GM13977 (cell line): ENCODE measurements at regions of chr11 and their contacts with region 1.

Region 1: DNA sequence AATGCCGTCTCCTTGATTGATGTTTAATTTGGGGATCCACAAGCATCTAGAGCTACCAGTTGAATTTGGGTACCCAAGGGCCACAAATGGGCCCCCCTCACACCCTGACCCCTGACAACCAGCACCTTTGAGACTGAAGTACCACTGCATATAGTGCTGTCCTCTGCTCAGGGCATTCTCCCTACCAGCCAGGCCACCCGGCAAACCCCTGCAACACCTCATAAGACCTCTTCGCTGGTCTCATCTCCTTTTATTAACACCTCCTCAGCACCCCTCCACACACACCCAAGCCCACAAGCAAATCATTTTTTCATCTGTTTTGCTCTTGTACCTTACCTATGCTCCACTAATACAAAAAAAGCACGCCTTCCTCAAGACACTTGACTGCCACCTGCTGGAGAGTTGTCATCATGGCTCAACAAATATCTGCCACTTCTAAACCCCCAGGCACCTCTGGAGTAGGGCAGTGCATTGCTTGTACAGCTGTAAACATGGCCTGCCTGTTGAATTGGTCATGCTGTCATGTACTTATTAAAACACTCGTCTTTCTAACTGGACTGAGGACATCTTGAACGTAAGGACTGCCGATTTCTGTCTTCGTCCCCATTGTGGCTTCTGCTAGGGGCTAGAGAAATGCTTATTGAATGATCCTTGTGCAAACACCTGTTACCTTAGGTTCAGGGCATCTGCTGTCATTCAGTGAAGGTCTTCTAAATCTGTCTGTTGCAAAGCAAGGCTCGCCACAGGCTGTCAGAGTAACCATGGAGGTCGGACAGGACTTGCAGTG is 66.5 kb downstream of the BMAL1 start:
- DNase-seq: peak; percentile 64
- CTCF ChIP-seq: peak; percentile 79

Region 2: DNA sequence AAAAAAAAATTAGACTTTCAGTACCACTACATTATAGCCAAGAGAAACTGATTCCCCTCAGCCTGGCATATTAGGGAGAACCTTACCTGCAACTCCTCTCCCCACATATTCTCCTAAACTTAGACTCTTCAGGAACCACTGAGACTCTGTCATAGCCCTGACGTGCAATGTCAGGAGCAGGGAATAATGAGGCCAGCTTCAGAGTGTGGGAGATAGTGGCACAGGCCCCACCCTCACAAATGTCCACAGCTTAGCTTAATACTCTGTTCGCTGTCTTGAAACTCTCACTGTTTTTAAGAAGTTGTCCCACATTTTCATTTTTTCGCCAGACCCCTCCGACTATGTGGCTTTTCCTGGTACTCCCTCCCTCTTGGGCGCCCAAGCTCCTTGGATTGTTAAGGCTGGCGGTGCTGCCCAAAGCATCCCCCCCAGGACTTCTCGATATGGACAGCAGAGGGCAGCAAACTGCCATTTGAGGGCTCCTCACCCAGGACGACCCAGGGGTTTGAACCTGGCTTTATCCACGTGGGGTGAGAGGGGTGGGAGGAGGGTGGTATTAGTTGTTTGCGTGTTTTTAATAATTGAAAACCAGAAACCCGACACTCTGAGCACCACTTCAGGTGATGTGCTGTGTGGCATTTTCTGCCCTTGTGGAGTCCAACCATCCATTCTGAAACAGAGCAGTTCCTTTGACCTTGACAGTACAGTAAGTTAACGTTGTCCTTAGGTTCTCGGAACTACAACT is 380.2 kb before region 1 on chr11:
- in situ Hi-C with region 1: loop called (anchors 25 kb)
- DNase-seq: peak; percentile 78
- CTCF ChIP-seq: peak; percentile 86

Region 3: DNA sequence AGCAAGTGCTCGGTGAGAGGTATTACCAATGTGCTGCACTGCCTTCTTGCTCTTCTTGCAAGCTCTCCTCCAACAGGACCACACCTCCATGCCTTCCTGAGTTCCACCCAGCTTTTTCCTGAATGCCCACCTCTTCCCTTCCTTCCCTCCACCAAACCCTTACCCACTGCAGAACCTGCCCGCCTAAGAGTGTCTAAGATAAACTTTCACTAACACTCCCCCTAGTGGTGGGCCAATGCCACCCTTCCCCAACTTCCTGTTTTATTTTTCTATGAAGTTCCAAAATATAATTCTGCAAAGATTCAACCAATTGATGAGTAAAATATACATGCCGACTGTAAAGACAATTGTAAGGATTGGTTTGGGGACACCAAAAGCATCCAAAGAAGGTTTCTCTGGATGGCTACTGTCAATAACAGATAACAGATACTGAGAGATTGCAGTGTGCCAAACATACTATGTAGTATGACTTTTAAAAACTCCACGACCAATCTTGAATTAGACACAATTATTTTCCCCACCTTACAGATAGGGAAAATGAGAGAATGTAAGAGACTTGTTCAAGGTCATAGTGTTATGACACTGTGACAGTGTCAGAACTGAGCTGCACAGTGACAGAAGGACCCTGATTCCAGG is 105.1 kb before region 1 on chr11:
- in situ Hi-C with region 1: loop called (anchors 25 kb)
- DNase-seq: peak; percentile 23
- CTCF ChIP-seq: peak; percentile 89